ENCODE measurements at regions of chr5 and their contacts with region 1.

Region 1: GRCh38 chr5:73088026-73088425 is 32.3 kb upstream of the TMEM171 start:
- DNase-seq: no peak
- H3K4me3 ChIP-seq: no peak overlapping the region
- H3K27ac ChIP-seq: no peak overlapping the region
- H3K4me1 ChIP-seq: no peaks in the 10 kb centered on the region
- H3K27me3 ChIP-seq: no peaks in the 10 kb centered on the region
- CTCF ChIP-seq: no peak

Region 2: GRCh38 chr5:73061593-73061992 is 26.4 kb before region 1 on chr5:
- CTCF ChIA-PET with region 1: no interaction called
- dilution Hi-C with region 1: no loop called
- in situ Hi-C with region 1: no loop called
- intact Hi-C with region 1: no loop called
- DNase-seq: no peak
- H3K4me3 ChIP-seq: no peak overlapping the region
- H3K27ac ChIP-seq: no peak overlapping the region
- H3K4me1 ChIP-seq: no peaks in the 10 kb centered on the region
- H3K27me3 ChIP-seq: no peaks in the 10 kb centered on the region
- CTCF ChIP-seq: no peak

Region 3: DNA sequence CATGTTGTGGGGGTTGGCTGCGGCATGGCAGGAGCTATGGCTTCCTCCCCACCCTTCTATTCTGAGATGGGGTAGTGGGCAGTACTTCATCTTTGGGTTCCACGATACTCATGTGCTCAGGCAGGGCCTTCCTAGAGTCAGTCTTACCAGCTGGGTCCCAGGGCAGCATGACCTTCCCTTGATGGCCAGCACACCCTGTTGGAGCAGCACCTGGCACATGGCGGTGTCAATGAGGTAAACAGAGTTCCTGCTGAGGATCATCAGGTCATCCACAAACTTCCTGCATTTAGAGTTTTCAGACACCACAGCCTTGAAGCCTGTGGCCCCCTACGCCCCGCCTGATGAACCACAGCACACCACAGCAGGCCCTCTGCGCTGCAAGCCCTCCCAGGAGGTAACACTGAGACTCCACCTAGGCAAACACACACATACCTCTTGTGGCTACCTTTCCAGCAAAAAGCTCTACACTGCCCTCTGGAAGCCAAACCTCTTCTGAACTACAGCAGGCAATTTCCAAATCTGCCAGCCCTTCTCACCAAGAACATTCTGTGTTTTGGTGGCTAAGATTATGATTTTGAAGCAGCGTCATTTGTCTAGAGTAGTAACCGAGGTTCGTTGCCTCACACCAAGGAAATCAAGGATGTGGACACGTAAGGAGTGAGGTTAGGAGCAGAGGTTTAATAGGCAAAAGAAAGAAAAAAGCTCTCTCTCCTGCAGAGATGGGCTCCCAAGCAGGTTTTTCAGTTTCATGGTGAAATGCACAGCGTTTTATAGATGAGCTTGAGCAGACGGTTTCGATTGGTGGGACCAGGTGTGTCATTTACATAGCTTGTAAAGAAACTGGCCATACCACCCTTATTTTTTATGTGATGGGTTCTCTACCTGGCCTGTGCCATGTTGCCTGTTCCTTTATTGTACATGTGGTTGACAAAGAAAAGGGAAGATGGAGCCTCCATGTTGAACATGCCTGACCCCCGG is 64.7 kb after region 1 on chr5:
- CTCF ChIA-PET with region 1: no interaction called
- dilution Hi-C with region 1: no loop called
- in situ Hi-C with region 1: no loop called
- intact Hi-C with region 1: loop called (anchors 1 kb)
- DNase-seq: no peak
- H3K4me3 ChIP-seq: no peak overlapping the region
- H3K27ac ChIP-seq: no peak overlapping the region
- H3K4me1 ChIP-seq: no peaks in the 10 kb centered on the region
- H3K27me3 ChIP-seq: no peaks in the 10 kb centered on the region
- CTCF ChIP-seq: peak in 1 of 2 donors; percentile 56

Region 4: GRCh38 chr5:73321757-73322436 is 233.9 kb after region 1 on chr5:
- CTCF ChIA-PET with region 1: no interaction called
- dilution Hi-C with region 1: no loop called
- in situ Hi-C with region 1: no loop called
- intact Hi-C with region 1: no loop called
- DNase-seq: peak; percentile 99
- H3K4me3 ChIP-seq: no peak overlapping the region
- H3K27ac ChIP-seq: peak overlapping the region; percentile 70
- H3K4me1 ChIP-seq: peaks cover 24% of the 10 kb centered on the region
- H3K27me3 ChIP-seq: no peaks in the 10 kb centered on the region
- CTCF ChIP-seq: no peak

Region 5: GRCh38 chr5:73544429-73545402 is 456.7 kb after region 1 on chr5:
- CTCF ChIA-PET with region 1: no interaction called
- dilution Hi-C with region 1: no loop called
- in situ Hi-C with region 1: no loop called
- intact Hi-C with region 1: no loop called
- DNase-seq: peak; percentile 81
- H3K4me3 ChIP-seq: no peak overlapping the region
- H3K27ac ChIP-seq: peak overlapping the region; percentile 39
- H3K4me1 ChIP-seq: peaks cover 46% of the 10 kb centered on the region
- H3K27me3 ChIP-seq: no peaks in the 10 kb centered on the region
- CTCF ChIP-seq: no peak